ENCODE measurements at regions of chr7 and their contacts with region 1.

Region 1: DNA sequence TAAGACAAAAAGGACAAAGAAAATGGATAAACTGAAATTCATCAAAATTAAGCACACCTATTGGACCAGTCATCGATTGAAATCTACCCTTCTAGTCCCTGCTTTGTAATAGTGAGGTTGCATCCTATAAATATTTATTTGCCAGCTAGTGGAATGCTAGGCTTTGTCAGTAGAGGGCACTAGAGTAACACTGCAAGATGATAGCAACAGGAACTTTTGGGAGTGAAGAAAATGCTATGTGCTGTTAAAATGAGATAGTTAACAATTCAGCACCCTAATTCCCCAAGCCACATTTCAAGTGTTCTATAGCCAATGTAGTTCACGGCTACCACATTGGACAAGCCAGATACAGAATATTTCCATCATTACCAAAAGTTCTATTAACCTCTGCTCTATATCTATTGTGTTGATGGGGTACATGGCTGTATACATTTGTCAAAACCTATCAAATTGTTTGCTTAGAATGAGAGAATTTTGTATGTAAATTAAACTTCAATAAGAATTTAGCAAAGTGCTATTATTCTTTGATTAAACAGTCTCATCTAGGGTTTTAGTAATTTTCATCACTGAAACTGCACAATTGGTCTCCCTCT is 69.8 kb downstream of the LSMEM1 start:
- DNase-seq: peak in 4 of 5 donors; percentile 43 to 50 (median 46)
- H3K4me3 ChIP-seq: no peak overlapping the region
- H3K4me3 Mint-ChIP-seq: no peak overlapping the region
- H3K27ac ChIP-seq: no peak overlapping the region
- H3K27ac Mint-ChIP-seq: no peak overlapping the region
- H3K4me1 ChIP-seq: no peaks in the 10 kb centered on the region
- H3K4me1 Mint-ChIP-seq: no peaks in the 10 kb centered on the region
- H3K27me3 ChIP-seq: no peaks in the 10 kb centered on the region
- H3K27me3 Mint-ChIP-seq: peaks cover 4% of the 10 kb centered on the region in 2 donors

Region 2: DNA sequence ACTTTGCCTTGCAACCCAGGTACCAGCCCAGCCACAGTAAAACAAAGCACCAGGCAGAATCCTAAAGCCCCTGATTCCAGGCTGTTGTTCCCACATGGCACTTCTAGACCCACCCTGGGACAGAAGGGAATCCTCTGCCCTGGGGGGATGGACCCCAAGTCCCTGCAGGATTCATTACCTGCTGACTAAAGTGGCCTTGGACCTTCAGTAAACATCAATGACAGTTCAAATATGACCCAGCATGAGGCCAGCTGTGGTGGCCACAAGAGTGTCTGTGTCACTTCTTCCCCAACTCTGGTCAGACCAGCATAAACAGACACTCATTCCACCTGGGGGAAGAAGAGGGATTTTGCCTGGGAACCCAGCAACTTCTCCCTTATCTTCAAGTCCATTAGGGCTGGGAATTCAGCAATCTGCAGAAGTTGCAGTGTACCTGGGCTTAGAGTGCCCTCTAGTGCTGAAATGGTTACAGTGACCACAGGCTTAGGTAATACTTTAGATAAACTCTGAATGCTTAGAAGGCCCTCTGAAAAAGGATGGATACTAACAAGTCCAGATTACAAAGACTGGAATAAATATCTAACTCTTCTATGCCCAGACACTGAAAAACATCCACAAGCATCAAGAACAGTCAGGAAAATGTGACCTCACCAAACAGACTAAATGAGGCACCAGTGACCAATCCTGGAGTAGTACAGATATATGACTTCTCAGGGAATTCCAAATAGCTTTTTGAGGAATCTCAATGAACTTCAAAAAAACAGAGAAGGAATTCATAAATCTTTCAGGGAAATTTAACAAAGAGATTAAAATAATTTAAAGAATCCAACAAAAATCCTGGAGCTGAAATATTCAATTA is 348.1 kb after region 1 on chr7:
- CTCF ChIA-PET with region 1: interaction called, 10 read pairs
- POLR2A ChIA-PET with region 1: no interaction called
- intact Hi-C with region 1: loop called (anchors 1 kb)
- DNase-seq: peak in 4 of 5 donors; percentile 22 to 32 (median 28)
- H3K4me3 ChIP-seq: no peak overlapping the region
- H3K4me3 Mint-ChIP-seq: no peak overlapping the region
- H3K27ac ChIP-seq: no peak overlapping the region
- H3K27ac Mint-ChIP-seq: no peak overlapping the region
- H3K4me1 ChIP-seq: no peaks in the 10 kb centered on the region
- H3K4me1 Mint-ChIP-seq: peaks cover 7 to 21% (median 13%) of the 10 kb centered on the region in 4 donors
- H3K27me3 ChIP-seq: no peaks in the 10 kb centered on the region
- H3K27me3 Mint-ChIP-seq: no peaks in the 10 kb centered on the region

Region 3: GRCh38 chr7:113421696-113422330 is 871.2 kb after region 1 on chr7:
- CTCF ChIA-PET with region 1: interaction called, 68 read pairs
- POLR2A ChIA-PET with region 1: no interaction called
- intact Hi-C with region 1: loop called (anchors 1 kb)
- DNase-seq: peak; percentile 62 to 72 (median 68)
- H3K4me3 ChIP-seq: no peak overlapping the region
- H3K4me3 Mint-ChIP-seq: peak overlapping the region in 4 of 8 donors; percentile 46 to 78 (median 64)
- H3K27ac ChIP-seq: no peak overlapping the region
- H3K27ac Mint-ChIP-seq: peak overlapping the region in 2 of 7 donors; percentile 43 to 64
- H3K4me1 ChIP-seq: peaks cover 3% of the 10 kb centered on the region
- H3K4me1 Mint-ChIP-seq: peaks cover 3 to 5% (median 4%) of the 10 kb centered on the region in 4 donors
- H3K27me3 ChIP-seq: no peaks in the 10 kb centered on the region
- H3K27me3 Mint-ChIP-seq: peaks cover 0 to 2% of the 10 kb centered on the region in 2 donors

Measured in CD4-positive, alpha-beta memory T cell (primary cell).